Ascending aorta (tissue), 2 donors: ENCODE measurements at regions of chr5 and their contacts with region 1.

Region 1: GRCh38 chr5:112965733-112966700 is 10.6 kb upstream of the DCP2 start:
- DNase-seq: no peak
- H3K4me3 ChIP-seq: no peak overlapping the region
- H3K27ac ChIP-seq: no peak overlapping the region
- H3K4me1 ChIP-seq: peaks cover 0 to 6% of the 10 kb centered on the region in 2 donors
- H3K27me3 ChIP-seq: no peaks in the 10 kb centered on the region
- CTCF ChIP-seq: no peak

Region 2: DNA sequence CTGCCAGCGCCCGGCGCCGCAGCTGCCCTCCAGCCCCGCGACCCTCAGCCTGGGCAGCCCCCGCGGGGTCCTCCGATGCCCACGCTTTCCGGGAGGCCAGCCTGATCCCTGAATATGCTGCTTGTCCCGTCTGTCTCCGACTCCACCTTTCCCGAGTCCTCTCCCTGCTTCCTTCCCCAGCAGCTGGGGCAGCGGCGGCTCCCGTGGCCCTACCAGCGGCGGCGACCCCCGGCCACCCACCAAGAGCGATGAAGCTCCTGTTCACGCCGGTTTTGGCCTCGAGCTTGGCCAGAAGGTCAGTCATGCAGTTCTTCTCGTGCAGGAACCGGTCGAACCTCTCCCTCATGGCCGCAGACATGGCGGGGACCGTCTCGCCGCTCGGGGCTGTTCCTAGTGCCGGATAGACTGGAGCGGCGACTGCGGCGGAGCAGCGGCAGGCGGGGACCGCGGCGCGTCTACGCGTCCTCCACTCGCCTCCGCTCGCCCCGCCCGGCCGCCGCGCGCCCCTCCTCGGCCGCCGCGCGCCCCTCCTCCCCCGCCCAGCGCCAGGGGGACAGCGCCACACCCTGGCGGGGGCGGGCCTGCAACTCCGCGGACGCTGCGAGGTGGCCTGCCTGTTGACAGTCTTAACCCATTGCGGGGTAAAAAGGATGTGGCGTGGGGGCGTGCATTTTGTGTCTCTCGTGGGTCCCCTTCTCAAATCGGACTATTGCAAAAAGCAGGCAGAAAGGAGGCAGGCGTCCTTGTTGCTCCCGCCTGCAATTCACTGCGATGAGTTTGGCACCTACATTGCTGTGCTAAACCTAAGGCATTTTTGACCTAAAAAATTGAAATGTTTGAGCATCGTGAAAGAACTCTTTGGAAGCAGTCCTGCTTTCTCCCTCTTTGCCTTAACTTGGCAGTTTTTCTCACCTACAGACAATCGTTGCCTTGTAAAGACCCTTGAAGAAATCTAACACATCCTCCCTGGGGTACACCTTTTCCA is 43.9 kb before region 1 on chr5 and contains the start of gene REEP5:
- intact Hi-C with region 1: loop called (anchors 2 kb)
- DNase-seq: peak; percentile 40 to 90
- H3K4me3 ChIP-seq: peak within 1 kb of the TSS; percentile 93 to 94
- H3K27ac ChIP-seq: peak within 1 kb of the TSS; percentile 97 to 99
- H3K4me1 ChIP-seq: peaks cover 8 to 33% of the 10 kb centered on the region in 2 donors
- H3K27me3 ChIP-seq: no peaks in the 10 kb centered on the region
- CTCF ChIP-seq: peak; percentile 40 to 90 (median 59)
- total RNA-seq, gene REEP5: 49.7 TPM

Region 3: GRCh38 chr5:112995764-112996618 is 30.0 kb after region 1 on chr5:
- intact Hi-C with region 1: no loop called
- DNase-seq: peak in 1 of 2 donors; percentile 85
- H3K4me3 ChIP-seq: no peak overlapping the region
- H3K27ac ChIP-seq: no peak overlapping the region
- H3K4me1 ChIP-seq: peaks cover 0 to 4% of the 10 kb centered on the region in 2 donors
- H3K27me3 ChIP-seq: no peaks in the 10 kb centered on the region
- CTCF ChIP-seq: peak; percentile 63 to 92 (median 90)